IMR-90 (cell line): ENCODE measurements at regions of chr12 and their contacts with region 1.

Region 1: DNA sequence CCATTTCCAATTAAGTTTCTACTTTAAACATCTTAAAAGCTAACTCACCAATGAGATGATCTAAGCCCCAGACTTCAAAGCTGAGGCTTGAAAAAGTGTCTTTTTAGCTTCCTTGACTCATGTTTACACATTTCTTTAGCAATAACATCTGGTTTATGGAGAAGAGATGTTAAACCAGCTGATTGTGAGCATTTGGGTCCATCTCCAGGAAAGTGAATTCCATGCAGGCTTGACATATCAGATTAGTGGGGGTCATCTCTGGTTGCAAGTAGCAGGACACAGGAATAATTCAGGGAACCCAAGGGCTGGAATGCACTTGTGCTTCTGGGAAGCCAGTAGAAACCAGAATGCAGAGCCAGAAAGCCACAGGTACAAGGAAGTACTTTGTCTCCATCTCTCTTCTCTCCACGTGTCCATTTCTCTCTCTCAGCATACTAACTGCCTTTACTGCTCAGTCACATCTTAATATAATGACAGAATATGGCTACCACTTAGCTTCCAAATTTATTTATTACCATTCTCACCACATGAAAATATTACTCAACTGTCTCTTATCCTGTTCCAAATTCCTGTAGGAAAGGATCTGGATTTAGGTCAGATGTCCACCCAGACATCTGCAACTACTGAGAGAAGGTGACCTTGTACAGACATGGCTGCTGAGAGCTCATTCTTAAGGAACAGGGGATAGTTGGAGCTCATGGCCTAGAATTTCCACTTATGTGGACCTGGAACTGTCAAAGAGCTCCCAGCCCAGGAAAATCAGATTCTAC is 104.4 kb downstream of the SCN8A start:
- DNase-seq: peak; percentile 56
- ATAC-seq: peak; percentile 87
- H3K4me3 ChIP-seq: no peak overlapping the region
- H3K27ac ChIP-seq: no peak overlapping the region
- H3K4me1 ChIP-seq: peaks cover 2% of the 10 kb centered on the region; the same call in 1 of the 2 replicates
- H3K27me3 ChIP-seq: no peaks in the 10 kb centered on the region
- CTCF ChIP-seq: no peak
- POLR2A ChIP-seq: no peak
- RAD21 ChIP-seq: peak; percentile 8; the same call in 1 of the 2 replicates

Region 2: DNA sequence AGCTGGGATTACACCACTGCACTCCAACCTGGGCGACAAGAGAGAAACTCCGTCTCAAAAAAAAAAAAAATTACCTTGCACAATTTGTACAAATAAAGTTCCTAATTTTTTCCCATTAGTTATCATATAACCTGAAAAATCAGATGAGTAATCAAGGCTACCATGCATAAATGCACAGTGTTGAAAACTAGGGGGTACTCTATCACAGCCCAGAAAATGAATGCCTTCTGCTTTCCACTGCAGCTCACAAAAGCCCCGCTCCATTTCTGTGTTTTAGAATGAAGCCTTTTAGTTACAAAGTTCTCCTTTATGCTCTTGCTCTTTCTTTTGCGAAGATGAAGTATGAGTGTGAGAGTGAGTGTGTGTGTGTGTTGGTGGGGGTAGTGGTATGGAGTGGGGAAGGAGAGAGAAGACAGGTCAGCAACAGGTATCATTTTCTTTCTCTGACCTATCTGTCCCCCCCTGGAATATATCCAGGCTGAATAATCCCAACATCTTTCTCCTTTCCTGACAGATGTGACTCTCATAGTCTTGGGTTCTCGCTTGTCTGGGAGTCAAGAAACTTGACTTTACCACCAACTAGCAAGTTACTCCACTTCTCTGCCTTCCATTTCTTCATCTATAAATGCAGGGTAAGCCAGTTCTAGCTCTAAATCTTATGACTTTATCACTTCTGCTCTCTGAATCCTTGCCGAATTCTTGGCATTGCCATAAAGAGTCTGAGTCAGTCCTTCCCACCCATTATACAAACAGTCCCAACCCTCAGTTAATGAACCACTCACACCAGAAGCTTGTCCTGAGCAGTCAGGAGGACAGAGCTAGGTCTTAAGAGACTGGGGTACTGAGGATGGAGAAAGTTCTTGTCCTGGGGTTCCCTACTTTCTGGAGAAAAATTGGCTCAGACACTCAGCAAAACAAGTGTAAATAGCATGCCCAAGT is 387.5 kb before region 1 on chr12:
- CTCF ChIA-PET with region 1: no interaction called
- POLR2A ChIA-PET with region 1: no interaction called
- dilution Hi-C with region 1: no loop called
- in situ Hi-C with region 1: no loop called
- intact Hi-C with region 1: loop called (anchors 5 kb)
- DNase-seq: peak; percentile 87
- ATAC-seq: peak; percentile 99
- H3K4me3 ChIP-seq: no peak overlapping the region
- H3K27ac ChIP-seq: no peak overlapping the region
- H3K4me1 ChIP-seq: peaks cover 2% of the 10 kb centered on the region; the same call in 1 of the 2 replicates
- H3K27me3 ChIP-seq: no peaks in the 10 kb centered on the region; the same call in 1 of the 2 replicates
- CTCF ChIP-seq: no peak
- POLR2A ChIP-seq: no peak
- RAD21 ChIP-seq: no peak

Region 3: GRCh38 chr12:51705450-51705849 is 10.0 kb after region 1 on chr12:
- CTCF ChIA-PET with region 1: no interaction called
- POLR2A ChIA-PET with region 1: no interaction called
- dilution Hi-C with region 1: no loop called
- in situ Hi-C with region 1: no loop called
- intact Hi-C with region 1: loop called (anchors 1 kb)
- DNase-seq: peak; percentile 61
- ATAC-seq: no peak
- H3K4me3 ChIP-seq: no peak overlapping the region
- H3K27ac ChIP-seq: no peak overlapping the region
- H3K4me1 ChIP-seq: no peaks in the 10 kb centered on the region
- H3K27me3 ChIP-seq: no peaks in the 10 kb centered on the region
- CTCF ChIP-seq: no peak
- POLR2A ChIP-seq: no peak
- RAD21 ChIP-seq: no peak